BJ (cell line): ENCODE measurements at regions of chr3 and their contacts with region 1.

Region 1: GRCh38 chr3:48739955-48740823 is 23.2 kb upstream of the IP6K2 start:
- DNase-seq: no peak
- H3K4me3 ChIP-seq: no peak overlapping the region
- H3K27me3 ChIP-seq: no peaks in the 10 kb centered on the region
- CTCF ChIP-seq: peak; percentile 93

Region 2: GRCh38 chr3:48685602-48686511 is 54.3 kb before region 1 on chr3 and contains the start of gene NCKIPSD:
- CTCF ChIA-PET with region 1: interaction called, 13 read pairs
- POLR2A ChIA-PET with region 1: no interaction called
- DNase-seq: no peak
- H3K4me3 ChIP-seq: peak within 1 kb of the TSS; percentile 67
- H3K27me3 ChIP-seq: no peaks in the 10 kb centered on the region
- CTCF ChIP-seq: peak; percentile 72
- polyA plus RNA-seq, gene NCKIPSD: 21.5 and 34.9 TPM in 2 replicates

Region 3: GRCh38 chr3:48716982-48717746 is 23.0 kb before region 1 on chr3 and contains the start of gene IP6K2:
- CTCF ChIA-PET with region 1: interaction called, 34 read pairs
- POLR2A ChIA-PET with region 1: no interaction called
- DNase-seq: peak; percentile 84
- H3K4me3 ChIP-seq: peak within 1 kb of the TSS; percentile 93
- H3K27me3 ChIP-seq: no peaks in the 10 kb centered on the region
- CTCF ChIP-seq: no peak
- polyA plus RNA-seq, gene IP6K2: 65.5 and 89.9 TPM in 2 replicates

Region 4: DNA sequence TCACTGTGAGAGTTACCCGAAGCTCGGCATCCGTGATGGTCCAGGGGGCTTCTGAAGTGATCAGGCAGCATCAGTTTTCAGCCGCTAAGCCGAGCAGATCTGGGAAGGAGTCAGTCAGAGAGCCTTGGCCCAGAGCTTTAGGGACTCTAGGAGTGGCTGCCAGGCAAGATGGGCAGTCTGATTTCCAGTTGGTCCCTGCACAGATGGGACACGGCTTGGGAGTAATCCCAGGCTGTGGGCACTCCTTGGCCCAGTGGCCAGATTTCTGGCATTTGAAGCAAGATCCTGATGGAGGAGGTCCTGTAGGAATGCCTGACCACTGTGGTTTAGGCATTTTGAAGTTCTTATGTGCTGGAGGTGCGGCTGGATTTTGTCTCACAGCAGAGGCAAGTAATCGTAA is 12.7 kb before region 1 on chr3:
- CTCF ChIA-PET with region 1: interaction called, 14 read pairs
- POLR2A ChIA-PET with region 1: no interaction called
- DNase-seq: no peak
- H3K4me3 ChIP-seq: no peak overlapping the region
- H3K27me3 ChIP-seq: peaks cover 3% of the 10 kb centered on the region; the same call in 1 of the 2 replicates
- CTCF ChIP-seq: no peak

Region 5: DNA sequence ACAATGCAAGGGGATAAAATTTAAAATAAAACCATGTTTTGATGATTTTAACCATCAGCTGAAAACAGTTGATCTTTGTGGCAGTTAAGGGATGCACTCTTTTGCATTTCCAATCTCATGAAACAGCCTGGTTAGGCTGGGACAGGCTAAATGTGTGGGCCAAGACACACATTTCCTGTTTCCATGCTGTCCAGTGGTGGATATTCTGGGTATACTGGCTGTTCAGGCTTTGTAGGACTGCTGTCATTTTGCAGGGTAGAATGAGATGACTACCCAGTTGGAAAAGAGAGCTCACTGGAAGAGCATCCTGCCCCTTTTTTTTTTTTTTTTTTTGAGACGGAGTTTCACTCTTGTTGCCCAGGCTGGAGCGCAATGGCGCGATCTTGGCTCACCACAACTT is 18.9 kb after region 1 on chr3:
- CTCF ChIA-PET with region 1: interaction called, 30 read pairs
- POLR2A ChIA-PET with region 1: no interaction called
- DNase-seq: no peak
- H3K4me3 ChIP-seq: no peak overlapping the region
- H3K27me3 ChIP-seq: no peaks in the 10 kb centered on the region
- CTCF ChIP-seq: no peak

Region 6: DNA sequence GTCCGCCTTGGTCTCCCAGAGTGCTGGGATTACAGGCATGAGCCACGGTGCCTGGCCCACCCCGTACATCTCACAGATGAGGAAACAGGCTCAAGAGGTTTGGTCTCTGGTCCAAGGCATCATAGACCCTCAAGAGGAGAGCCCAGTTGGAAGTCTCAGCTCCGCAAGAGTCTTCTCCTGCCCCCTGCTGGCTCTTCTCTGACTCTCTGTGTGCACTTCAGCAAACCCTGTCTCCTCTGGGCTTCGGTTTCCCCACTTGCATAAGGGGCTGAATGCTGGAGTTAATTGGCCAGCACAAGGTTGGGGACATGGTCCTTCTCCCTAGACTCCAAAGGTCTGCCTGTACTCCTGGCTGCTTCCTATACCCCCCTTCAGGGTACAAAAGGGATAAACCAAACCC is 1159.6 kb after region 1 on chr3:
- CTCF ChIA-PET with region 1: no interaction called
- POLR2A ChIA-PET with region 1: no interaction called
- DNase-seq: no peak
- H3K4me3 ChIP-seq: no peak overlapping the region
- H3K27me3 ChIP-seq: no peaks in the 10 kb centered on the region
- CTCF ChIP-seq: 0 out of 2 replicates have a peak, but pooled peaks have one; percentile 1